Heart left ventricle (tissue), 16 donors: ENCODE measurements at regions of chr15 and their contacts with region 1.

Region 1: DNA sequence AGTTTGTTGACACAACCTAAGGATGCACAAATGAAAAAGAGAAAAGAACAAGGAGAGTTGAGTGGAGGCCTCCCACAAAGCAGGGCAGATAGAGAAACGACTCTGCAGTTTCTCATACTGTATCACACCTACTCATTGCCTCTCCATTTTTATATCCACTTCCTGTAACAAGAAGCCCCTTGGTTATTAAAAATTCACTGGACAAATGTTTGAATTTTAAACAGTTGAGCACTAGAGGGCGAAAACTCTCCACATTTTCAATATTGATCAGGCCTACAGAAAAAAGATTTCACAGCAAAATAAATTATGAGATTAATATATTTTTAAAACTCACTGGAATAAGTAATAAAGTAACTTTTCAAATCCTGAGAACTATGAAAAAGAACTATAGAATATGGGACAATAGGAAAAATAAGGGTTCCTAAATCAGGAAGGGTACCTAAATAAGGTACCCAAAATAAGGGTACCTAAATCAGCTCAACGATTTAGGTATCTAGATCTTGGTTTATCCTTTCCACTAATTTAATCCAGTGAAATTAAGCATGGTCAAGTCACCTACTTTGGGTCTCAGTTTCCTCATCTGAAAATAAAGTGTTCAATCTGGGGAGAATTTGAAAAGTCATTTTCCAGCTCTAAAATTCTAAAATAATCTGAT is 47.0 kb upstream of the PPIB start:
- DNase-seq: no peak
- ATAC-seq: no peak
- H3K4me3 ChIP-seq: no peak overlapping the region
- H3K27ac ChIP-seq: no peak overlapping the region
- H3K4me1 ChIP-seq: no peaks in the 10 kb centered on the region
- H3K27me3 ChIP-seq: no peaks in the 10 kb centered on the region
- CTCF ChIP-seq: peak; percentile 28 to 55 (median 44)
- POLR2A ChIP-seq: no peak

Region 2: GRCh38 chr15:64344651-64345294 is 135.0 kb after region 1 on chr15:
- intact Hi-C with region 1: loop called in 1 of 10 experiments (anchors 10 kb)
- DNase-seq: no peak
- ATAC-seq: no peak
- H3K4me3 ChIP-seq: no peak overlapping the region
- H3K27ac ChIP-seq: no peak overlapping the region
- H3K4me1 ChIP-seq: peaks cover 0 to 20% (median 4%) of the 10 kb centered on the region in 12 donors
- H3K27me3 ChIP-seq: no peaks in the 10 kb centered on the region
- CTCF ChIP-seq: no peak
- POLR2A ChIP-seq: no peak

Region 3: DNA sequence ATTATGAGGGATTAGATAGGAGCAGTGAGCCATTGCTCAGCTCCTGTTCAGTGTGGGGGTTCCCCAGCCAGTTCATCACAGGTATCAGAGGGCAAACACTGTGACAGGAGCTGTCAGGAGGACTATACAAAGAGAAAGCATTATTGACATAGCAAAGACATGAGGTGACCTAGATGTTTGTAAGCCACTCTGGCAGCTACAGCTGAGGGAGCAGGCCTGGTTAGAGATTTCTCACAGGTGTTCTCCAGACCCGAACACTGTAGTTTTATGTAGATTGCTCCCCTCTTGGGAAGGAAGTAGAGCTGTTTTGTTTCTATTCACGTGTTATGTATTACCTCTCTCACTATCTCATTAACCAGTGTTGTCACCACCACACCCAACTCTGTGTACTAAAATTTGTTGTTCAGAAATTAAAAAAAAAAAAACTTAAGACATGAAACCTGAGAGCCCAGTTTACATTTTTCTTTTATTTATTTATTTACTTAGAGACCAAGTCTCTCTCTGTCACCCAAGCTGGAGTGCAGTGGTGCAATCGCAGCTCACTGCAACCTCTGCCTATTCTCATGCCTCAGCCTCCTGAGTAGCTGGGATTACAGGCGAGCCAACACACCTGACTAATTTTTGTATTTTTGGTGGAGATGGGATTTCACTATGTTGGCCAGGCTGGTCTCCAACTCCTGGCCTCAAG is 441.9 kb after region 1 on chr15:
- intact Hi-C with region 1: loop called in 2 of 10 experiments (anchors 10 kb)
- DNase-seq: no peak
- ATAC-seq: no peak
- H3K4me3 ChIP-seq: no peak overlapping the region
- H3K27ac ChIP-seq: no peak overlapping the region
- H3K4me1 ChIP-seq: peaks cover 0 to 17% (median 0%) of the 10 kb centered on the region in 12 donors
- H3K27me3 ChIP-seq: no peaks in the 10 kb centered on the region
- CTCF ChIP-seq: no peak
- POLR2A ChIP-seq: no peak